ENCODE measurements at regions of chr15 and their contacts with region 1.

Region 1: GRCh38 chr15:43225201-43225949 is 4.6 kb upstream of the EPB42 start:
- DNase-seq: peak; percentile 12 to 41 (median 33)
- H3K4me3 ChIP-seq: no peak overlapping the region
- H3K4me3 Mint-ChIP-seq: no peak overlapping the region
- H3K27ac ChIP-seq: no peak overlapping the region
- H3K27ac Mint-ChIP-seq: no peak overlapping the region
- H3K4me1 ChIP-seq: no peaks in the 10 kb centered on the region
- H3K4me1 Mint-ChIP-seq: no peaks in the 10 kb centered on the region
- H3K27me3 ChIP-seq: no peaks in the 10 kb centered on the region
- H3K27me3 Mint-ChIP-seq: peaks cover 10 to 23% (median 17%) of the 10 kb centered on the region in 3 donors
- CTCF ChIP-seq: peak; percentile 70

Region 2: GRCh38 chr15:43285609-43286037 is 60.2 kb after region 1 on chr15:
- intact Hi-C with region 1: loop called (anchors 1 to 2 kb)
- DNase-seq: peak; percentile 27 to 72 (median 56)
- H3K4me3 ChIP-seq: no peak overlapping the region
- H3K4me3 Mint-ChIP-seq: no peak overlapping the region
- H3K27ac ChIP-seq: no peak overlapping the region
- H3K27ac Mint-ChIP-seq: no peak overlapping the region
- H3K4me1 ChIP-seq: no peaks in the 10 kb centered on the region
- H3K4me1 Mint-ChIP-seq: peaks cover 4% of the 10 kb centered on the region
- H3K27me3 ChIP-seq: no peaks in the 10 kb centered on the region
- H3K27me3 Mint-ChIP-seq: peaks cover 0 to 12% (median 4%) of the 10 kb centered on the region in 3 donors
- CTCF ChIP-seq: peak; percentile 81

Measured in CD14-positive monocyte (primary cell).